ENCODE measurements at regions of chr11 and their contacts with region 1.

Region 1: DNA sequence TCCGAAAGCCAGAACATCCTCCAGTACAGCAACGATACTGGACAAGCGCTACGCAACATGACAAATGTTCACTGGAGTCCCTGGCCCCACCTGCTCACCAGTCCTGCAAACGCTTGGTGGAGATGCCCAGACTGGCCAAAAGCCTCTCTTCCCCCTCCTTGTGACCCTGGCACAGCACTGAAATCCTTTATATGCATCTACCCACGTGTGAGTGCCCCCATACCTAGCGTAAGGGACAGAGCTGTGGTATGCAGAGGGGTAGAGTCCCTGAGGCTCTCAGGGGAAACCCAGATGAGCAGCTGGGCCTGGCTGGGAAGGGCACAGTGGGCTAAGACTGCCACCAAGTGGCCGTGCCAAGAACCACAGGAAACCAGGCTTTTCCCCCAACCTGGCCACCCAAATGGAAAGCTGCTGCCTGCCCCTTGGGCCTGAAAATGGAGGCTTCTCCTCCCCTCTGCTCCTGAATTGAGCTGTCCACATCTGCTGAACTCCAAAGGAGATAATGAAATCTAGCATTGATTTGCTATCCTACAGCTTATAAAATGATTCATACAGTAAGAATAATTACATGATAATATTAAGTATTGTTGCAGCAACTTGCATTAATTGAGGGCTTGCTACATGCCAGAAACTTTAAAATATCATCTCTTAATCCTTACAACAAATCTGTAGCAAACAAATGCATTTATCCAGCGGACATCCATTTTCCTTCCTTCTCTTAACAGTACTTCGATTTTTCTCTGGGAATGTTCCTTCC is 24.8 kb upstream of the TTC12 start:
- DNase-seq: peak; percentile 80
- H3K4me3 ChIP-seq: no peak overlapping the region
- H3K27ac ChIP-seq: no peak overlapping the region
- H3K4me1 ChIP-seq: peaks cover 0 to 17% (median 17%) of the 10 kb centered on the region in 4 donors
- H3K27me3 ChIP-seq: no peaks in the 10 kb centered on the region
- CTCF ChIP-seq: peak; percentile 80 to 96 (median 86)
- EP300 ChIP-seq: no peak
- POLR2A ChIP-seq: no peak

Region 2: GRCh38 chr11:112784323-112785073 is 505.1 kb before region 1 on chr11:
- intact Hi-C with region 1: loop called (anchors 10 kb)
- DNase-seq: peak; percentile 88
- H3K4me3 ChIP-seq: peak overlapping the region in 2 of 4 donors; percentile 4 to 6
- H3K27ac ChIP-seq: peak overlapping the region; percentile 57 to 80 (median 64)
- H3K4me1 ChIP-seq: peaks cover 0 to 43% (median 33%) of the 10 kb centered on the region in 4 donors
- H3K27me3 ChIP-seq: no peaks in the 10 kb centered on the region
- CTCF ChIP-seq: no peak
- EP300 ChIP-seq: peak in 1 of 4 donors; percentile 29
- POLR2A ChIP-seq: no peak

Region 3: GRCh38 chr11:113119074-113119473 is 170.5 kb before region 1 on chr11:
- intact Hi-C with region 1: loop called (anchors 5 kb)
- DNase-seq: no peak
- H3K4me3 ChIP-seq: no peak overlapping the region
- H3K27ac ChIP-seq: peak overlapping the region in 3 of 4 donors; percentile 2 to 46 (median 45)
- H3K4me1 ChIP-seq: peaks cover 0 to 38% (median 26%) of the 10 kb centered on the region in 4 donors
- H3K27me3 ChIP-seq: no peaks in the 10 kb centered on the region
- CTCF ChIP-seq: no peak
- EP300 ChIP-seq: no peak
- POLR2A ChIP-seq: no peak